Body of pancreas (tissue), 4 donors: ENCODE measurements at regions of chr22 and their contacts with region 1.

Region 1: DNA sequence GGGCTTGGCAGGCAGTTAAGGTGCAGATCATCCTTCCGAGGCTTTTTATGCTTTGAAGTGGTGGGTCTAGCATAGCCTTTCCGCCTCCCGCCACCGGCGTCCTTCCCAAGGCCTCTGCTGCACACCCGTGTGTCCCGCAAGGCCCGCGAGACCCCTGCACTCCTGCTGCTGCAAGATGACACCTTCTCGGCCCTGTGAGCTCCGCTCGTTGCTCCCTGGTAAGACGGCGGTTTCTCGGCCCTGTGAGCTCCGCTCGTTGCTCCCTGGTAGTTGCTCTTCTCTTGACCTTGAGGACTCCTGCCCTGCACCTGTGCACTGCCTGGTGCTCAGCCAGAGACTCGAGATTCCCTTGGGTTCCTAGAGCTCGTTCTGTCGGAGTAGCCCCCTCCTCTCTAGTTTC is 17.9 kb upstream of the TRMU start:
- DNase-seq: no peak
- ATAC-seq: no peak
- H3K4me3 ChIP-seq: no peak overlapping the region
- H3K27ac ChIP-seq: no peak overlapping the region
- H3K4me1 ChIP-seq: no peaks in the 10 kb centered on the region
- H3K27me3 ChIP-seq: no peaks in the 10 kb centered on the region
- CTCF ChIP-seq: no peak
- POLR2A ChIP-seq: no peak

Region 2: GRCh38 chr22:45994491-45995404 is 322.9 kb before region 1 on chr22:
- intact Hi-C with region 1: loop called (anchors 5 kb)
- DNase-seq: peak; percentile 82 to 87 (median 84)
- ATAC-seq: peak; percentile 73
- H3K4me3 ChIP-seq: no peak overlapping the region
- H3K27ac ChIP-seq: no peak overlapping the region
- H3K4me1 ChIP-seq: peaks cover 24% of the 10 kb centered on the region
- H3K27me3 ChIP-seq: no peaks in the 10 kb centered on the region
- CTCF ChIP-seq: peak; percentile 94 to 97 (median 95)
- POLR2A ChIP-seq: no peak

Region 3: DNA sequence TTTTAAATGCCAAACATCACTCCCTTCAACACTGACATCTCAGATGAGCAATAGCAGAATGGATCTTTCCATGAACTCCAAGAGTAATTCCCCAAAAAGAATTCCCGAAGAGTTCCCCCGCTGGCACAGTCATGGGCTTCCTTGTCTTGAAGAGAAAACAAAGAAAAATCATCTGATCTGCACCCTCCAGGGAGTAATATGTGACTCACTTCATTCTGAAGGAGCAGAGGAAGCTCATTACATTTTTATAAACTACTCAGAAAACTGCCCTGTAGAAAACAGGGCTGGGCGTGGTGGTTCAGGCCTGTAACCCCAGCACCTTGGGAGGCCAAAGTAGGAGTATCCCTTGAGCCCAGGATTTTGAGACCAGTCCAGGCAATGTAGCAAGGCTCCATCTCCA is 184.1 kb after region 1 on chr22:
- intact Hi-C with region 1: no loop called
- DNase-seq: no peak
- ATAC-seq: no peak
- H3K4me3 ChIP-seq: no peak overlapping the region
- H3K27ac ChIP-seq: no peak overlapping the region
- H3K4me1 ChIP-seq: no peaks in the 10 kb centered on the region
- H3K27me3 ChIP-seq: no peaks in the 10 kb centered on the region
- CTCF ChIP-seq: no peak
- POLR2A ChIP-seq: no peak